HepG2 (cell line): ENCODE measurements at regions of chr15 and their contacts with region 1.

Region 1: DNA sequence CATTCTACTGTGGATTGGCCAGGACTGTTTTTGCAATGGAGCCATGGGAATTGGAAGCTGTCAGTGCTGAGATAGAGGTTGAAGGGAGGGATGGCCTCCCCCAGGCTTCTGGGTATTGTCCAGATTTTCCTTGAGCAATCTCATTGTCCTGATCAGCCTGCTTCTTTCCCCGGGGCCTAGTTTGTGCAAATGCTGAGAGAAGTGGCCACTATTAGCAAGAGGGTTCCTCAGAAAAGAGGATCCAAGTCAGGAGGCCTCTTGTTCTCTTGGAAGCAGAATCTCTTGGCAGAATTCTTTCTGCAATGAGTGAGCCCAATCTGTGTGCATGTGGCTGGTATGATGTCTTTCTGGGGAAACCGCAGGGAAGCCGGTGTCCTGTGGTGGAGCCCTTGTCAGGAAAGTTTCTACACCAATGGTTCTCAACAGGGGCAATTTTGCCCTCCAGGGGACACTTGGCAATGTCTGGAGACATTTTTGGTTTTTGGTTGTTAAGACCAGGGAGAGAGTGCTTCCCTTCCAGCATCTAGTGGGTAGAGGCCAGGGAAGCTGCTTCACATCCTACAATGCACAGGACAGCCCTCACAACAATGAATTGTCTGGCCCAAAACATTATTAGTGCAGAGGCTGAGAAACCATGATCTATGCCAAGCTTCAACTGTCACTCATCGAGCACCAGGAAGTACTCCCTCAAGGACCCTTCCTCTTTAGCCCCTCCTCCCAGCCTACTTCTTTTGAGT is 2.0 kb downstream of the LIPC start:
- DNase-seq: no peak
- ATAC-seq: no peak; the same call in 2 of the 3 replicates
- H3K4me3 ChIP-seq: peak overlapping the region; percentile 17 to 73 (median 70); a peak in 3 of 6 replicates
- H3K27ac ChIP-seq: no peak overlapping the region
- H3K4me1 ChIP-seq: peaks cover 55% of the 10 kb centered on the region
- H3K27me3 ChIP-seq: no peaks in the 10 kb centered on the region; a peak in 1 of 5 replicates
- CTCF ChIP-seq: 0 out of 2 replicates have a peak, but pooled peaks have one; percentile 14
- EP300 ChIP-seq: no peak
- POLR2A ChIP-seq: no peak
- RAD21 ChIP-seq: no peak

Region 2: GRCh38 chr15:58227706-58228543 is 205.8 kb before region 1 on chr15:
- CTCF ChIA-PET with region 1: no interaction called
- POLR2A ChIA-PET with region 1: no interaction called
- in situ Hi-C with region 1: no loop called
- intact Hi-C with region 1: loop called (anchors 5 kb)
- DNase-seq: peak; percentile 62
- ATAC-seq: peak; percentile 65
- H3K4me3 ChIP-seq: no peak overlapping the region
- H3K27ac ChIP-seq: no peak overlapping the region
- H3K4me1 ChIP-seq: peaks cover 18% of the 10 kb centered on the region; the same call in 1 of the 2 replicates
- H3K27me3 ChIP-seq: no peaks in the 10 kb centered on the region
- CTCF ChIP-seq: peak; percentile 84
- EP300 ChIP-seq: no peak
- POLR2A ChIP-seq: no peak
- RAD21 ChIP-seq: peak; percentile 83; the same call in 1 of the 2 replicates

Region 3: GRCh38 chr15:58269455-58270414 is 164.0 kb before region 1 on chr15:
- CTCF ChIA-PET with region 1: no interaction called
- POLR2A ChIA-PET with region 1: no interaction called
- in situ Hi-C with region 1: no loop called
- intact Hi-C with region 1: loop called (anchors 5 kb)
- DNase-seq: peak; percentile 71
- ATAC-seq: peak; percentile 97
- H3K4me3 ChIP-seq: no peak overlapping the region; a peak in 1 of 6 replicates
- H3K27ac ChIP-seq: no peak overlapping the region
- H3K4me1 ChIP-seq: peaks cover 5% of the 10 kb centered on the region; the same call in 1 of the 2 replicates
- H3K27me3 ChIP-seq: no peaks in the 10 kb centered on the region; a peak in 1 of 5 replicates
- CTCF ChIP-seq: peak; percentile 92
- EP300 ChIP-seq: no peak
- POLR2A ChIP-seq: no peak
- RAD21 ChIP-seq: peak; percentile 93

Region 4: DNA sequence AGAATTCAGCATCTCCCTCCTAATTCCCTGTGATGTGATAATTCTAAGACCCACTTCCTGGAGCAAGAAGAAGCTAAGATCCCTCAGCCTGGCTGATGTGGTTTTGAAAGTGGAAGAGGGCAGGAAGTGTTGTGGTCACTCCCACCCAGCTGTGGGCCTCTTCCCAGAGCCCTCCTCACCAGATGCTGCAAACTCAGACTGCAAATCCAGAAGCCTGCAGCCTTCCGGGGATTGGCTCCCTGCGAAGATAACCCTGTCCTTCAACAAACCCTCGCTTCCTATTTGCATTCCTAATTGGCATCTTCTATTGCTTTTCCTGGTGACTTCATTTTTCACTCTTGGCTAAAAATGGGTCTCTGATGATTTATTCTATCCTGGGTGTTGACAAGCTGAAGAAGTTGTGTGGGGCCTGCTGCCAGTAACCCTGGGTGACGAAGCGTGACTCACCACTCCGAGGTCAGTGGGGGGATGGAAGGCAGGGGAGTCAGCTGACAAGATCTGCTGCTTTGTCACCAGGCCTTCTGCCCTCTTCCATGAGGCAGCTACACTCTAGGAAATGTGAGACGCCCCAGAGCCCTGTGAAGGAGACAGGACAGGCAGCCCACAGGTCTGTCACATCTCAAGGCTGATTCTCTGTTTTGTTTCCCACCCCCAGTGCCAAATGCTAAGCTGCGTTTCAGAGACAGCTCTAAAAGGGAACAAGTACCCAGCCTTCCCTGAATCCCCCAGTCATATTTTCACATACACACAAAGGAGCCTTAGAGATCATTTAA is 101.7 kb before region 1 on chr15:
- CTCF ChIA-PET with region 1: no interaction called
- POLR2A ChIA-PET with region 1: interaction called, 6 read pairs
- in situ Hi-C with region 1: no loop called
- intact Hi-C with region 1: loop called (anchors 5 kb)
- DNase-seq: peak; percentile 92
- ATAC-seq: peak; percentile 85
- H3K4me3 ChIP-seq: peak overlapping the region; percentile 26 to 67 (median 48)
- H3K27ac ChIP-seq: peak overlapping the region; percentile 74
- H3K4me1 ChIP-seq: peaks cover 50% of the 10 kb centered on the region
- H3K27me3 ChIP-seq: no peaks in the 10 kb centered on the region; a peak in 1 of 5 replicates
- CTCF ChIP-seq: no peak
- EP300 ChIP-seq: peak in 1 of 2 experiments; percentile 85; a peak in 2 of 4 replicates
- POLR2A ChIP-seq: peak; percentile 65 to 91
- RAD21 ChIP-seq: no peak

Region 5: GRCh38 chr15:58715266-58715917 is 281.6 kb after region 1 on chr15:
- CTCF ChIA-PET with region 1: no interaction called
- POLR2A ChIA-PET with region 1: no interaction called
- in situ Hi-C with region 1: no loop called
- intact Hi-C with region 1: no loop called
- DNase-seq: no peak
- ATAC-seq: no peak
- H3K4me3 ChIP-seq: no peak overlapping the region
- H3K27ac ChIP-seq: no peak overlapping the region
- H3K4me1 ChIP-seq: no peaks in the 10 kb centered on the region
- H3K27me3 ChIP-seq: no peaks in the 10 kb centered on the region
- CTCF ChIP-seq: no peak
- EP300 ChIP-seq: no peak
- POLR2A ChIP-seq: no peak
- RAD21 ChIP-seq: no peak

Region 6: GRCh38 chr15:58749532-58750337 is 316.0 kb after region 1 on chr15 and contains the start of gene ADAM10:
- CTCF ChIA-PET with region 1: no interaction called
- POLR2A ChIA-PET with region 1: no interaction called
- in situ Hi-C with region 1: no loop called
- intact Hi-C with region 1: loop called (anchors 5 kb)
- DNase-seq: peak; percentile 95
- ATAC-seq: peak; percentile 96
- H3K4me3 ChIP-seq: peak within 1 kb of the TSS; percentile 91 to 99 (median 95)
- H3K27ac ChIP-seq: peak within 1 kb of the TSS; percentile 97
- H3K4me1 ChIP-seq: peaks cover 32% of the 10 kb centered on the region
- H3K27me3 ChIP-seq: no peaks in the 10 kb centered on the region; a peak in 1 of 5 replicates
- CTCF ChIP-seq: peak; percentile 21; the same call in 1 of the 2 replicates
- EP300 ChIP-seq: no peak
- POLR2A ChIP-seq: peak; percentile 66 to 83
- RAD21 ChIP-seq: no peak
- total RNA-seq, gene ADAM10: 86.8 and 125 TPM in 2 replicates